CD8-positive, alpha-beta T cell (primary cell): ENCODE measurements at regions of chr4 and their contacts with region 1.

Region 1: DNA sequence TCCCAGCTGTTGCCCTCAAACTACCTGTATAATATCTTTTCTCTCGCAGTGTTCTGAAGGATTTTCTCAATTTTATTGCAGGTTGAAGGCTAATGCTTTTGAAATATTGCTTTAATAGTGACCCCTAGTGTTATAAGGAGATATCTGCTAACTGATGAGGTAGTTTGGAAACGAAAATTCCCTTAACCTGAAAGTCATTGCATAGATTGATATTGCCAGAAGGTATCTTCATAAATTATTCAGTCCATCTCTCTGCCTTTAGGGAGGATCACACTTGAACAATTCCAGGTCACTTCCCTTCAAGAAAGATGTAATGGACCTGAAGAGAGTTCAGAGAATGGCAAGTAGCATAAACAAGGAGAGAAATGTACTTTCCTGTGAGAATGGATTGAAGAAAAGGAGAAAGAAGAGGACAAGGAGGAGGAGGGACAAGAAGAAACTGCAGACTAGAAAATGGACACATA is 44.1 kb downstream of the TIGD4 start:
- DNase-seq: peak in 2 of 9 experiments; percentile 32 to 45
- ATAC-seq: peak; percentile 38
- H3K4me3 ChIP-seq: no peak overlapping the region
- H3K4me3 Mint-ChIP-seq: no peak overlapping the region
- H3K27ac ChIP-seq: no peak overlapping the region
- H3K27ac Mint-ChIP-seq: no peak overlapping the region
- H3K4me1 ChIP-seq: no peaks in the 10 kb centered on the region
- H3K4me1 Mint-ChIP-seq: no peaks in the 10 kb centered on the region
- H3K27me3 ChIP-seq: no peaks in the 10 kb centered on the region
- H3K27me3 Mint-ChIP-seq: no peaks in the 10 kb centered on the region
- CTCF ChIP-seq: peak; percentile 10

Region 2: DNA sequence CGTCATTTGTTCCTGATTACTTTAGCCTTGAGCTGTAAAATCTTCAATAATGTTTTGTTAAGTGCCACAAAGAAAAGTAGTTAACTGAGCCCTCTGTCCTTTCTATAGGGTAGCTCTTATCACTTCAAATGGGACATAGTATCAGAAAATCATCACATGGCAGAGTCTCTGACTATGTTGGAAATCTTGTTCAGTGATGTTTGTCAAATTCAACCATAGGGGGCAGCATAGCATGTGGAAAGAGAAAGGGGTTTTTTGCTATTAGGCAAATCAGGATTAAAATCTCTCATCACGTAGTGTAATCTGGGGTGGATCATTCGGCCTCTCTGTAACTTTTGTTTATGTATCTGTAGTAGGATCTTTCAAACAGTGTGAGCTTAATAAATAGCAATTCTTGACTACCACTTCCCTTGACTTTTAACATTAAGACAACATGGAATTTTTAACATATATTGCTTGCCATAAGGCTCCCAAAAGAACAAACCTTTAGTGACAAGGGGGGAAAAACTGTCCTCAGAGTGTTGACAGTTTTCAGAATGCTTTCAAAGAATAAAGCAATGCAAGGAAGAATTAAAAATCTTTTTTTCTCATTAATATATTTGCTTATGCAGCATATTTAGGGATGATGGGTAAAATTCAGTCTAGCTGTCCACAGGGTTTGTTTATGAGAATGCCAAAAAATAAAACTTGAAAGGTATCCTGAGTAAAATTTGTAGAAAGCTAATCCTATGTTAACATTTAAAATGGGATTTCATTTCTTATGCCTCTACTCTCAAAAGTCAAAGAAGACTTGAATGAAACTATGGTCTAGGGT is 326.7 kb before region 1 on chr4:
- CTCF ChIA-PET with region 1: interaction called, 15 read pairs
- POLR2A ChIA-PET with region 1: no interaction called
- intact Hi-C with region 1: loop called in 1 of 2 experiments (anchors 2 kb)
- DNase-seq: peak in 3 of 9 experiments; percentile 10 to 60 (median 49)
- ATAC-seq: peak; percentile 40
- H3K4me3 ChIP-seq: no peak overlapping the region
- H3K4me3 Mint-ChIP-seq: no peak overlapping the region
- H3K27ac ChIP-seq: no peak overlapping the region
- H3K27ac Mint-ChIP-seq: no peak overlapping the region
- H3K4me1 ChIP-seq: no peaks in the 10 kb centered on the region
- H3K4me1 Mint-ChIP-seq: peaks cover 13% of the 10 kb centered on the region
- H3K27me3 ChIP-seq: no peaks in the 10 kb centered on the region
- H3K27me3 Mint-ChIP-seq: no peaks in the 10 kb centered on the region
- CTCF ChIP-seq: peak; percentile 57

Region 3: GRCh38 chr4:152454398-152455011 is 280.9 kb before region 1 on chr4:
- CTCF ChIA-PET with region 1: interaction called, 3 read pairs
- POLR2A ChIA-PET with region 1: no interaction called
- intact Hi-C with region 1: loop called (anchors 1 to 5 kb)
- DNase-seq: peak in 1 of 9 experiments; percentile 21
- ATAC-seq: peak; percentile 36
- H3K4me3 ChIP-seq: no peak overlapping the region
- H3K4me3 Mint-ChIP-seq: no peak overlapping the region
- H3K27ac ChIP-seq: no peak overlapping the region
- H3K27ac Mint-ChIP-seq: no peak overlapping the region
- H3K4me1 ChIP-seq: peaks cover 13% of the 10 kb centered on the region
- H3K4me1 Mint-ChIP-seq: peaks cover 37% of the 10 kb centered on the region
- H3K27me3 ChIP-seq: no peaks in the 10 kb centered on the region
- H3K27me3 Mint-ChIP-seq: no peaks in the 10 kb centered on the region
- CTCF ChIP-seq: peak; percentile 62

Region 4: DNA sequence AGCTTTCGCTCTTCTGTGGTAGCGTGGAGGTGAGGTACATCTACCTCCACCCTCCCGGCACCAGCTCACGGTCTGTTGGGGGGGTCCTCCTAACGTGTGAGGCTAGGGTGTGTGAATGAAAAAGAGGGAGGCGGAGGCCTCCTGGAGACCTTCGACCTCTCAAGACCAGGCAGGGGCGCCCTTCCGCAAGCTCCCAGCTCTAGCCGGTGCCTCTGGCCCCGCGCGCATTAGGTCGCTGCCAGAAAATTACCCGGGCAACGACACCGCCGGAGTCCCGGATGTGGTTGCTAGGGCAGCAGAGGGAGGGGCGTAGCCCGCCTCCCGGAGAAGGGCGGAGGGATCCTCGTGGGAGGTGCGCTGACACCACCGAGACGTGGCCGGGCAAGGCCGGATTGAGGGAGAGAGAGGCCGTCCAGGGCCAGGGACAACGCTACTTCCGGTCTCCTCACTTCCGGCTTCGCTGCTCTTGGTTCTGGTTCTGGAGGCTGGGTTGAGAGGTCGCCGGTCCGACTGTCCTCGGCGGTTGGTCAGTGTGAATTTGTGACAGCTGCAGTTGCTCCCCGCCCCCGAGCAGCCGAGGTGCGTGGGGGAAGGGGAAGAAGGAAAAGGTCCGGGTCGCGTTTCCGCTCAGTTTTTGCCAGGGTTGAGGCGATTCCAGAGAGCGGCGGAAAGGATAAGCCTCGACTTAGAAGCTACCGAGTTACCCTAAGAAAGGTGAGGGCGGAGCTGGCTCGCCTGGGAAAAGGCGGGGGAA is 44.3 kb after region 1 on chr4 and contains the starts of genes ARFIP1 and TIGD4:
- CTCF ChIA-PET with region 1: no interaction called
- POLR2A ChIA-PET with region 1: no interaction called
- intact Hi-C with region 1: no loop called
- DNase-seq: peak; percentile 87 to 96 (median 94)
- ATAC-seq: peak; percentile 83
- H3K4me3 ChIP-seq: peak within 1 kb of the TSS; percentile 82 to 97
- H3K4me3 Mint-ChIP-seq: peak within 1 kb of the TSS; percentile 99
- H3K27ac ChIP-seq: peak within 1 kb of the TSS; percentile 77 to 86
- H3K27ac Mint-ChIP-seq: peak within 1 kb of the TSS; percentile 96
- H3K4me1 ChIP-seq: peaks cover 25% of the 10 kb centered on the region
- H3K4me1 Mint-ChIP-seq: peaks cover 45% of the 10 kb centered on the region
- H3K27me3 ChIP-seq: peaks cover 0 to 4% of the 10 kb centered on the region in 2 experiments
- H3K27me3 Mint-ChIP-seq: no peaks in the 10 kb centered on the region
- CTCF ChIP-seq: no peak
- total RNA-seq, gene ARFIP1: 1.9 to 2.8 TPM
- total RNA-seq, gene TIGD4: 0.11 TPM in 1 of 2 experiments, not detected in the other